GM12878 (cell line): ENCODE measurements at regions of chr5 and their contacts with region 1.

Region 1: DNA sequence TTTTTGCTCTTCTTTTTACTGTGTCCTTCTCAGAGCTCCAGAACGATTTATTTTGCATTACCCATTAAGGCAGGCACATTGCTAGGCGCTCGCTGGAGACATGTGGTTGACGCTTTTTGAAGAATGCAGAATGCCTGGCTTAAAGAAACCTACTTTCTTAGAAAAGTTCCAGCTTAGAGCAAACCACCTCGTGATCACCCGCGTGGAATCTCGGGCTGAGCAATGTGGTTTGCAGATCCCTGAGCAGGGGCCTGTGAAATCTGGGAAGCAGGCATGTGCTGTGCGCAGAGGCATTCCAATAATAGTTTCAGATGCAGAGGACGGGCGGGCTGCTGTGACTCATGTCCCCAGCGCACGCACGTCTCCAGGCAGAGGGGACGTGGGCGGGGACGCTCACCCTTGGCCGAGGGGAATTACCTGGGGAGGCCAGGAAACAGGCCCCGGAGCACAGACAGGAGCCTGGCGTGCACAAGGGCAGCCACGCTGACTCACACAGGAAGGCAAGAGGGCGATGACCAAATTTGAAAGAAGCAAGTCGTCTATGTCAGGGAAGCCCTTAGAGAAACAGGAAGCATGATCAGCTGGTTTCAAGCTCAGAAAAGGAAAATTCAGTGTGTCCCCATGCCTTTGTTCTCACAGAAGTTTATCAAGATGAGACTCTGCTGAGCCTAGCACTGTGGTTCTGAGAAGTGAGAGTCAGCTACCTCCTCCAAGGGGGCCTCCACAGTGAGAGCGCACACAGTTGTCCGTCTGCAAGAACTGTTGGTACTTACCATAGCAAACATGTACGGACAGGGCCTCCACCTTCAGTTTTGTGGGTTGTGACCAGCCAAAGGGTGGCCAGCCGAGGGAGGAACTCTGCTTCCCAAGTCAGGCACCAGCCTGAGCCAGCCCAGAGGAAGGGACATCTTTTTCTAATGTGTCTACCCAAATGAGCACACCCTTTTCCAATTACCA is 218.6 kb downstream of the PIK3R1 start:
- DNase-seq: peak; percentile 99
- ATAC-seq: peak; percentile 96
- H3K4me3 ChIP-seq: no peak overlapping the region
- H3K27ac ChIP-seq: peak overlapping the region; percentile 97
- H3K4me1 ChIP-seq: peaks cover 58% of the 10 kb centered on the region
- H3K27me3 ChIP-seq: no peaks in the 10 kb centered on the region
- CTCF ChIP-seq: no peak
- EP300 ChIP-seq: peak; percentile 72 to 82; a peak in 3 of 4 replicates
- POLR2A ChIP-seq: peak; percentile 24; the same call in 1 of the 2 replicates
- RAD21 ChIP-seq: peak; percentile 33

Region 2: GRCh38 chr5:68315679-68316271 is 118.4 kb before region 1 on chr5:
- CTCF ChIA-PET with region 1: no interaction called
- POLR2A ChIA-PET with region 1: no interaction called
- RAD21 ChIA-PET with region 1: interaction called, 9 read pairs
- SMC1A ChIA-PET with region 1: interaction called, 24 read pairs
- in situ Hi-C with region 1: no loop called
- intact Hi-C with region 1: no loop called
- DNase-seq: peak; percentile 55
- ATAC-seq: peak; percentile 100
- H3K4me3 ChIP-seq: no peak overlapping the region
- H3K27ac ChIP-seq: no peak overlapping the region
- H3K4me1 ChIP-seq: peaks cover 13% of the 10 kb centered on the region
- H3K27me3 ChIP-seq: no peaks in the 10 kb centered on the region
- CTCF ChIP-seq: no peak
- EP300 ChIP-seq: 0 out of 4 replicates have a peak, but pooled peaks of 1 of the 2 experiments have one; percentile 28
- POLR2A ChIP-seq: no peak
- RAD21 ChIP-seq: no peak

Region 3: GRCh38 chr5:68343421-68343826 is 90.8 kb before region 1 on chr5:
- CTCF ChIA-PET with region 1: interaction called, 3 read pairs
- POLR2A ChIA-PET with region 1: interaction called, 3 read pairs
- RAD21 ChIA-PET with region 1: interaction called, 11 read pairs
- SMC1A ChIA-PET with region 1: interaction called, 10 read pairs
- in situ Hi-C with region 1: no loop called
- intact Hi-C with region 1: no loop called
- DNase-seq: peak; percentile 55
- ATAC-seq: peak; percentile 83
- H3K4me3 ChIP-seq: no peak overlapping the region
- H3K27ac ChIP-seq: no peak overlapping the region
- H3K4me1 ChIP-seq: peaks cover 21% of the 10 kb centered on the region
- H3K27me3 ChIP-seq: no peaks in the 10 kb centered on the region
- CTCF ChIP-seq: no peak
- EP300 ChIP-seq: no peak
- POLR2A ChIP-seq: no peak
- RAD21 ChIP-seq: no peak

Region 4: DNA sequence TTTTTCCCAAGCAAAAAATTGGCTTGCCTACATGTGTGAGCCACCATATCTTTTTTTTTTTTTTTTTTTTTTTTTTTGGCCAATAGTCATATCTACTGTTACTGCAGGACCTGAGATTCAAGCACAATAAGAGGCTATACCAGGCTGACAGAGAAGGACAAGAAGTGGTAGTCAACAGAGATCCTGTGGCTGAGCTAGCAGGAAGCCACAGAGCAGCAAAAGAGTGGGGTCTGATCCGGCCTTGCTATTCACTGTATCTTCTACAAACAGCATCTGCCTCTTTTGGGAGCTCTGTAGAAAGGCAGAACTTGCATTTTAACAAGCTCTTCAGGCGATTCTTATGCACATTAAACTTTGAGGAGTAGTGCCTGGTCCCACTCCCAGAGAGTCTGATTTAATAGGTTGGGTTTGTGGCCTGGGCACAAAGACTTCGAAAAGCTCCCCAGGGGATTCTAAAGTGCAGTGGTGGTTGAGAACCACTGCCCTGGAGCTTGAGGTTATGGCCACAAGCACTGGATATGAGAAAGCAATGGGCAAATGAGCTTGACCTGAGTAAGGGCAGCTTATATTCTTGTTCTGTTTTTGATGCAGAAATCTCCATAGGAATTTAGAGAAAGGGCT is 55.9 kb before region 1 on chr5:
- CTCF ChIA-PET with region 1: interaction called, 4 read pairs
- POLR2A ChIA-PET with region 1: interaction called, 4 read pairs
- RAD21 ChIA-PET with region 1: interaction called, 5 read pairs
- SMC1A ChIA-PET with region 1: interaction called, 14 read pairs
- in situ Hi-C with region 1: no loop called
- intact Hi-C with region 1: loop called (anchors 1 kb)
- DNase-seq: peak; percentile 55
- ATAC-seq: peak; percentile 90
- H3K4me3 ChIP-seq: no peak overlapping the region
- H3K27ac ChIP-seq: peak overlapping the region; percentile 15; the same call in 1 of the 2 replicates
- H3K4me1 ChIP-seq: peaks cover 22% of the 10 kb centered on the region
- H3K27me3 ChIP-seq: no peaks in the 10 kb centered on the region; a peak in 1 of 4 replicates
- CTCF ChIP-seq: no peak
- EP300 ChIP-seq: no peak
- POLR2A ChIP-seq: no peak
- RAD21 ChIP-seq: no peak

Region 5: GRCh38 chr5:68419637-68420452 is 14.4 kb before region 1 on chr5:
- CTCF ChIA-PET with region 1: interaction called, 5 read pairs
- POLR2A ChIA-PET with region 1: interaction called, 4 read pairs
- RAD21 ChIA-PET with region 1: interaction called, 9 read pairs
- SMC1A ChIA-PET with region 1: interaction called, 12 read pairs
- in situ Hi-C with region 1: no loop called
- intact Hi-C with region 1: no loop called
- DNase-seq: no peak
- ATAC-seq: no peak
- H3K4me3 ChIP-seq: no peak overlapping the region
- H3K27ac ChIP-seq: no peak overlapping the region
- H3K4me1 ChIP-seq: peaks cover 4% of the 10 kb centered on the region
- H3K27me3 ChIP-seq: no peaks in the 10 kb centered on the region
- CTCF ChIP-seq: no peak
- EP300 ChIP-seq: no peak
- POLR2A ChIP-seq: no peak
- RAD21 ChIP-seq: no peak